ENCODE measurements at regions of chr17 and their contacts with region 1.

Region 1: DNA sequence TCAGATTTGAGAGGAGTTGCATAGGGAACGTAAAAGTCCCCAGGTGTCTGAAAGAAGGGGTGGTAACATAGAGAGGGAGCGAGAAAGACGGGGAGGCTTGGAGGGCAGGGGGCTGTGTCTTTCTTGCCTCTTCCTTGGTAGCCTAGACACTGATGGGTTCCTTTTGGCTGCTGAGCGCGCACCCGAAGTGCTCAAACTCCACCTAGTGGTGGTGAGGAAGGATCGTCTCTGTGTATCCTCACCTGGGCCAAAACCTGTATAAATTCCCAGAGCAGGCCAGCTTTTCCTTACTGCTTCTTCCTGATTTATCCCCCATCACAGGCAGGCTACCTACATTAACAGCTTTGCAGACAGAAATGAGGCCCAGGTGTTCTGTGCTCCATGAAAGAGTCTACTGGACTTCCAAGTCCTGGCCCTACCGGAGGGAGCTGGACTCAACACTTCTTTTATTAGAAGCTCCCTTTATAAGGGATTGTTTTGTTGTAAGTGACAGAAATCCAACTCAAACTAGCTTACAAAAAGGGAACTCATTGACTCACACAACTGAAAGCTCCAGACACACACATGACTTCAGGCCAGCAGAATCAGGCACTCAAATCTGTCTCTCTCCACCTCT is 5.5 kb upstream of the SLC25A35 start:
- DNase-seq: peak; percentile 39
- H3K4me3 Mint-ChIP-seq: no peak overlapping the region
- H3K27ac Mint-ChIP-seq: peak overlapping the region; percentile 21
- H3K4me1 Mint-ChIP-seq: peaks cover 14% of the 10 kb centered on the region
- H3K27me3 Mint-ChIP-seq: no peaks in the 10 kb centered on the region

Region 2: GRCh38 chr17:8091033-8091687 is 209.6 kb before region 1 on chr17:
- intact Hi-C with region 1: loop called (anchors 1 kb)
- DNase-seq: no peak
- H3K4me3 Mint-ChIP-seq: no peak overlapping the region
- H3K27ac Mint-ChIP-seq: no peak overlapping the region
- H3K4me1 Mint-ChIP-seq: peaks cover 14% of the 10 kb centered on the region
- H3K27me3 Mint-ChIP-seq: peaks cover 24% of the 10 kb centered on the region

Region 3: DNA sequence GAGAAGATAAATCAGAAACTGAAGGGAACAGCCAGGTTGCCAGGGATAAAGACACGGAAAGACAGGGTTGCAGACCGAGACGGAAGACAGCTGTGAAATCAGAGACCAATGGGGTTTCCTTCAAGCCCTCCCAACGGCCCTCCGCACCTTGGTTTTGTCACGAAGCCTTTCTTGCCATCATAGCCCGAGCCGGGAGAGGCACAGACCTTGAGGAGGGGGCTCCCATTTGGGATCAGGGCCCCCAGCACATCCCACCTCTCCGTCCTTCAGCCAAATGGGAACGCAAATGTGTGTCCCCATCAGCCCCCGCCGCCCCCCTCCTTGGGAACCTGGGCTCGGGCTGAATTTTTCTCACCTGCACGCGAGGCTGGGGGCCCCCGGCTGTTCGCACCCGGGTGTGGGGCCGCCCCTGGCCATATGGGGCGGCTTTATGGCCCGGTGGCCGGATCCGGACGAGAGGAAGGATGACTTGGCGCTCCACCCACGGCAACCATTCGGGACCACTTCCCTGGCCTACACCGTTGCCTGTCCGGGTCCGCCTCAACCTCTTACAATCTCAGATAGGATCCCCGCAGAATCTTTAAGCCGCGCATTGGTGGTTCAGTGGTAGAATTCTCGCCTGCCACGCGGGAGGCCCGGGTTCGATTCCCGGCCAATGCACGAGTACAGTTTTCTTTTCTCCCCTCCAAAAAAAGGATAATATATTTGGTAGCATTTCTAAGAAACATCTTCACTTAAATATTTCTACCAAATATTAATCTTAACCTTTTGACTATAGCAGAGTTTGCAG is 175.4 kb before region 1 on chr17:
- intact Hi-C with region 1: loop called (anchors 2 kb)
- DNase-seq: peak; percentile 79
- H3K4me3 Mint-ChIP-seq: peak overlapping the region; percentile 91
- H3K27ac Mint-ChIP-seq: peak overlapping the region; percentile 97
- H3K4me1 Mint-ChIP-seq: peaks cover 49% of the 10 kb centered on the region
- H3K27me3 Mint-ChIP-seq: peaks cover 52% of the 10 kb centered on the region

Region 4: DNA sequence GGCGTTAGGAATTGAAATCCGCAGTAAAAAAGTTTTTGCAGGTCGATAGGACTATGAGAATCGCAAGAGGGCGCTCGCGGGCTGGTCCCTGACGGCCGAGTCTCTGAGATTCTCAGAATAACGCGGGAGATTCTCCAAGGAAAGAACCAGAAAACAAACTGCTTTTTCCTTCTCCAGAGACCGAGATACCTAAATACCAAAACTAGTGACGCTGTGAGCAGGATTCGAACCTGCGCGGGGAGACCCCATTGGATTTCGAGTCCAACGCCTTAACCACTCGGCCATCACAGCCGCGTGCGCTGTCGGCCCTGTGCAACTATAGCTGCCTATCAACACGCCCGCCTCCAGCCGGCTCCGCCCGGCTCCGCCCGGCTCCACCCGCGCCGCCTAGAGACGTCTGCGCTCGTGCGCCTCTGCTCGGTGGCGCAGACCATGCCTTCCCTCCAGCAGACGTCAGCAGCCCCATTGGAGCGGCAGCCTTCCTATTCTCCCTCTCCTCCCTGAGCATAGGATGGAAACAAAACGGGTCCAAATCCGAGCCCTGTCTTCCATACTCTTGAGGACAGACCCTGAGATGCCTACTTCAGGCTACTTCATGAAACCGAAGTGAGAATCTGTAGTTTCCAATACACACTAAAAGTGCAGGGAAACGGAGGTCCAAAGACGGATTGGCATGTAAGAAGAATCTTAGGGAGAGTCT is 161.9 kb before region 1 on chr17:
- intact Hi-C with region 1: loop called (anchors 1 kb)
- DNase-seq: peak; percentile 95
- H3K4me3 Mint-ChIP-seq: no peak overlapping the region
- H3K27ac Mint-ChIP-seq: no peak overlapping the region
- H3K4me1 Mint-ChIP-seq: no peaks in the 10 kb centered on the region
- H3K27me3 Mint-ChIP-seq: peaks cover 11% of the 10 kb centered on the region

Region 5: GRCh38 chr17:8204761-8205555 is 95.8 kb before region 1 on chr17:
- intact Hi-C with region 1: loop called (anchors 1 kb)
- DNase-seq: no peak
- H3K4me3 Mint-ChIP-seq: no peak overlapping the region
- H3K27ac Mint-ChIP-seq: no peak overlapping the region
- H3K4me1 Mint-ChIP-seq: peaks cover 26% of the 10 kb centered on the region
- H3K27me3 Mint-ChIP-seq: no peaks in the 10 kb centered on the region

Region 6: GRCh38 chr17:8248751-8249607 is 51.8 kb before region 1 on chr17 and contains the start of gene PFAS:
- intact Hi-C with region 1: loop called (anchors 1 kb)
- DNase-seq: peak; percentile 95
- H3K4me3 Mint-ChIP-seq: peak within 1 kb of the TSS; percentile 98
- H3K27ac Mint-ChIP-seq: peak within 1 kb of the TSS; percentile 100
- H3K4me1 Mint-ChIP-seq: peaks cover 40% of the 10 kb centered on the region
- H3K27me3 Mint-ChIP-seq: peaks cover 1% of the 10 kb centered on the region
- total RNA-seq, gene PFAS: 189 and 204 TPM in 2 replicates

Region 7: GRCh38 chr17:8288336-8289102 is 12.2 kb before region 1 on chr17 and contains the start of gene RANGRF:
- intact Hi-C with region 1: loop called (anchors 1 kb)
- DNase-seq: peak; percentile 85
- H3K4me3 Mint-ChIP-seq: peak within 1 kb of the TSS; percentile 86
- H3K27ac Mint-ChIP-seq: peak within 1 kb of the TSS; percentile 92
- H3K4me1 Mint-ChIP-seq: peaks cover 37% of the 10 kb centered on the region
- H3K27me3 Mint-ChIP-seq: no peaks in the 10 kb centered on the region
- total RNA-seq, gene RANGRF: 52.9 and 57.9 TPM in 2 replicates

Region 8: DNA sequence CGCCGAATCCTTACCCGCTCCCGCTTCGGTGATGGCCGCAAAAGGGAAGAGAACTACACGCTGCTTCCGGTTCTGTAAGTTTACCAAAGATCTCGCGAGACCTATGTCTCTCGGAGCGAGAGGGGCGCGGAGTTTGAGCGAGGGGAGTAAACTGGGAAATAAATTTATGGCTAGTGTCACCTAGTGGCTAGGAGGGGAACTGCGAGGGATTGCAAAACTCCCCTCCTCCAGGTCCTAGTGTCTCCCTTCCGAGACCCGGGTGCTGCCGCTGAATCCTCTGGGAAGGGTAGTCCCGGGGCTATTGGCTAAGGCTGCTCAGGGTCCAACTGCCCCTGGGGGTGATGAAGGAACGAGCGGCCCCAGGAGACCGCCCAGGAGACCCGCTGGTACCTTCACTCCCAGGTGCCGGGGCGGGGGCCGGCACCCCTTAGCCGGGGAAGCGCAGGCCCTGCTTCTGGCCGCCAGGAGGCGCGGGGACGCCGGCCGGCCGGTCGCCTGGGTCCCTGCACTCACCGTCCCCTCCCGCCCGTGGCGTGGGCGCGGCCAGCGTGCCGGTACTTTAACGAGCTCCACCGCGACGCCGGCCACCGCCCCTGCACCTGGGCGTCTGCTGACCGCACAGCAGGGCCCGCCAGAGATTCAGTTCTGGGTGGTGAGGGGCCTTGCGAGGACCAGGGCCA is 82.5 kb after region 1 on chr17 and contains the start of gene RPL26:
- intact Hi-C with region 1: no loop called
- DNase-seq: peak; percentile 94
- H3K4me3 Mint-ChIP-seq: peak within 1 kb of the TSS; percentile 90
- H3K27ac Mint-ChIP-seq: peak within 1 kb of the TSS; percentile 87
- H3K4me1 Mint-ChIP-seq: peaks cover 42% of the 10 kb centered on the region
- H3K27me3 Mint-ChIP-seq: no peaks in the 10 kb centered on the region
- total RNA-seq, gene RPL26: 2,163 and 2,185 TPM in 2 replicates

Measured in activated T-helper 1 cell treated with anti-CD3 and anti-CD28 coated beads, Interleukin-12 subunit alpha, Interleukin-12 subunit beta, Interleukin-2, Interleukin-4 antibody, amounts not matched to agents 30 ng/mL and 10 ng/mL and 1 ng/mL, durations not matched to agents 14 hours and 24 hours and 36 hours (primary cell).